ENCODE measurements at regions of chr21 and their contacts with region 1.

Region 1: GRCh38 chr21:42820616-42821474 is 58.5 kb downstream of the WDR4 start:
- DNase-seq: no peak
- CTCF ChIP-seq: no peak

Region 2: GRCh38 chr21:42593007-42593806 is 227.6 kb before region 1 on chr21:
- in situ Hi-C with region 1: loop called (anchors 10 kb)
- DNase-seq: peak; percentile 95
- CTCF ChIP-seq: peak; percentile 66